ENCODE measurements at regions of chr1 and their contacts with region 1.

Region 1: GRCh38 chr1:38834937-38835827 is 24.4 kb downstream of the RRAGC start:
- DNase-seq: peak; percentile 63
- H3K4me3 Mint-ChIP-seq: no peak overlapping the region
- H3K27ac Mint-ChIP-seq: no peak overlapping the region
- H3K4me1 Mint-ChIP-seq: no peaks in the 10 kb centered on the region
- H3K27me3 Mint-ChIP-seq: peaks cover 14% of the 10 kb centered on the region

Region 2: GRCh38 chr1:38088366-38088765 is 746.8 kb before region 1 on chr1:
- CTCF ChIA-PET with region 1: no interaction called
- intact Hi-C with region 1: no loop called
- DNase-seq: peak; percentile 7
- H3K4me3 Mint-ChIP-seq: no peak overlapping the region
- H3K27ac Mint-ChIP-seq: no peak overlapping the region
- H3K4me1 Mint-ChIP-seq: no peaks in the 10 kb centered on the region
- H3K27me3 Mint-ChIP-seq: peaks cover 23% of the 10 kb centered on the region

Region 3: DNA sequence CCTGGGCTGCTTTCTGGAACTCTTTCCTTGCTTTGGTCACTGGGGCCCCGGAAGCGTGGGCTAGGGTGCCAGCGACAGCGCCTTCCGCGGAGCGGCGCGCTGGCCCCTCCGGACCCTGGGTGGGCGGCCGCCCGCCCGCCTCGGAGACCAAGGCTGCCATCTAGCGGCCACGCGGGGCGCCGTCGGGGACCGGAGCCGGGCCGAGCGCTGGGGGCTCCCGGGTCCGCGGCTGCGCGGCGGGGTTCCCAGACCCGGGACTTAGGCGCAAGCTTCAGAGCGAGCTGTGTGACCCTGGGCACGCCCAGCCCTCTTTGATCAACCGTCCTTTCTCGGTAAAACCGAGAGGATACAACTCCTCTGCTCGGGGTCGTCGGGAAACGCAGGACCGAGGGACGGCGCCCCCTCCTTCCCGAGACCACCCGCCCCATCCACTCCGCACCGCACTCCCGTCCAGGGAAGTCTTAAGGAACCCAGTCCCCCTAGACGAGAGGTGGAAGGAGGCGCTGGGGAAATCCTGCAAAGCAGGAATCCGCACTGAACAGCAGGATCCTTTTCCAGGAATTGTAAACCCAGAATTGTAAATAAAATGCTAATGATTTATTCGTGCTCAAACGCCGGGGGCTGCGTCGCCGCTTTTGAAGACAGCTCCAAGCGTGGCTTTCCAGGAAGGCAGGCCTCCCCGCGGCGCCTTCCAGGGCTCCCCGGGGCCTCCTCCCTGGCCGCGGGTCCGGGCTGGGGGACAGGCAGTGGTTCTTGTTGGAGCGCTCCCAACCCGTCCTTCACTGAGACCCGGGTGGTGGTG is 16.8 kb before region 1 on chr1:
- CTCF ChIA-PET with region 1: interaction called, 11 read pairs
- intact Hi-C with region 1: no loop called
- DNase-seq: peak; percentile 33
- H3K4me3 Mint-ChIP-seq: no peak overlapping the region
- H3K27ac Mint-ChIP-seq: no peak overlapping the region
- H3K4me1 Mint-ChIP-seq: peaks cover 9% of the 10 kb centered on the region
- H3K27me3 Mint-ChIP-seq: peaks cover 52% of the 10 kb centered on the region

Region 4: GRCh38 chr1:38846210-38846609 is 11.0 kb after region 1 on chr1:
- CTCF ChIA-PET with region 1: interaction called, 11 read pairs
- intact Hi-C with region 1: no loop called
- DNase-seq: peak; percentile 17
- H3K4me3 Mint-ChIP-seq: no peak overlapping the region
- H3K27ac Mint-ChIP-seq: no peak overlapping the region
- H3K4me1 Mint-ChIP-seq: peaks cover 7% of the 10 kb centered on the region
- H3K27me3 Mint-ChIP-seq: no peaks in the 10 kb centered on the region

Region 5: DNA sequence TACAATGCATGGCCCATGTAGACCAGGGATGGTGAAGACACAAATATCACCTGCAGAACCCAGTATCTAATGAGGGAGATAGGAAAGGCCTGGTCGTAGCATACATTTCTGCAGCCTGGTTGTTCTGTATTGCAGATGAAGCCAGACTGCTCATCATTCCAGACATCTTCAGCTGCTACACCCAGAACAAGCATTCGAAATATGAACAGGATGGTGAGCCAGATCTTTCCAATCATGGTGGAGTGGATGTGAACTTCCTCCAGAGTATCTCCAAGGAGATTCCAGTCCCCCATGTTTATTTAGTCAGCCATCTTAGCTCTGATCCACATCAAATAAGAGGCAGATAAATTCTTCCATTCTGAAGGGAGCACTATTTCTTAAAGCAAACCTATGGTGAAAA is 40.6 kb after region 1 on chr1:
- CTCF ChIA-PET with region 1: no interaction called
- intact Hi-C with region 1: no loop called
- DNase-seq: no peak
- H3K4me3 Mint-ChIP-seq: no peak overlapping the region
- H3K27ac Mint-ChIP-seq: no peak overlapping the region
- H3K4me1 Mint-ChIP-seq: peaks cover 19% of the 10 kb centered on the region
- H3K27me3 Mint-ChIP-seq: no peaks in the 10 kb centered on the region

Region 6: GRCh38 chr1:38990738-38991639 is 155.8 kb after region 1 on chr1 and contains the start of gene AKIRIN1:
- CTCF ChIA-PET with region 1: no interaction called
- intact Hi-C with region 1: no loop called
- DNase-seq: peak; percentile 97
- H3K4me3 Mint-ChIP-seq: peak within 1 kb of the TSS; percentile 80
- H3K27ac Mint-ChIP-seq: peak within 1 kb of the TSS; percentile 84
- H3K4me1 Mint-ChIP-seq: peaks cover 52% of the 10 kb centered on the region
- H3K27me3 Mint-ChIP-seq: no peaks in the 10 kb centered on the region
- total RNA-seq, gene AKIRIN1: 58.1 to 58.5 TPM

Measured in activated naive CD4-positive, alpha-beta T cell treated with anti-CD3 and anti-CD28 coated beads for 36 hours (primary cell).